IMR-90 (cell line): ENCODE measurements at regions of chr4 and their contacts with region 1.

Region 1: DNA sequence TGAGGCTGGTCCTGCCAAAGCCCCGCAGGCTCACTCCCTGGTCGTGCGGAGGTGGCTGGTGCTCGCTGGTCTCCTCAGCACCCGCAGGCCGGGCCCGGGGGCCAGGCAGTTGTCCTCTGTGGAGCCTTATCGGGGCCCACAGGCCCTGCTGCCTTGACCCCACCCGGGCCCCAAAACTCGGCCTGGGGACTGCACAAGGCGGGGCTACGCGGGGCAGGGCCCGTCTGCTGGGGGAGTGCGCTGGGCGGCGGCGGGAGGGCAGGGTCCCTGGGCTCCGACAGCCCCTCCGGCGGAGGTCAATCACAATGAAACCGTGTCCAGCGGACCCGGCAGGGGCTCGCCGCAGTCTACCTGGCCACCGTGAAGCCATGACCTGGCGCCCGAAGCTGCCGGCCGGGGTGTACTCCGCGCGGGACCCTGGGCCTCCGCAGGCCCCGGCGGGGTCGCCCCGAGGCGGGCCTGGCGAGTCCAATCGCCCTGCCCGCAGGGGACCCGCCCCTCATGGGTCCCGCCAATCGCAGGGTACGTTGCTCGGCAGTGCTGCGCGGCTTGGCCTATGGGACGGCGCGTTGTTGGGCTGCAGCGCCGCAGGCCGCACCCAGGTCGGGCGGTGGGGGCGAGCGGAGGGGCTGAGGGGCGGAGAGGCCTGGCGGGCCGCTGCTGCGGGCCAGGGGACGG is at the start of gene ADD1:
- DNase-seq: peak; percentile 91
- ATAC-seq: peak; percentile 93
- H3K4me3 ChIP-seq: peak within 1 kb of the TSS; percentile 77
- H3K27ac ChIP-seq: peak within 1 kb of the TSS; percentile 93
- H3K4me1 ChIP-seq: peaks cover 9% of the 10 kb centered on the region
- H3K27me3 ChIP-seq: no peaks in the 10 kb centered on the region
- CTCF ChIP-seq: no peak
- POLR2A ChIP-seq: peak; percentile 41; the same call in 1 of the 2 replicates
- RAD21 ChIP-seq: no peak
- total RNA-seq, gene ADD1: 117 and 122 TPM in 2 replicates

Region 2: DNA sequence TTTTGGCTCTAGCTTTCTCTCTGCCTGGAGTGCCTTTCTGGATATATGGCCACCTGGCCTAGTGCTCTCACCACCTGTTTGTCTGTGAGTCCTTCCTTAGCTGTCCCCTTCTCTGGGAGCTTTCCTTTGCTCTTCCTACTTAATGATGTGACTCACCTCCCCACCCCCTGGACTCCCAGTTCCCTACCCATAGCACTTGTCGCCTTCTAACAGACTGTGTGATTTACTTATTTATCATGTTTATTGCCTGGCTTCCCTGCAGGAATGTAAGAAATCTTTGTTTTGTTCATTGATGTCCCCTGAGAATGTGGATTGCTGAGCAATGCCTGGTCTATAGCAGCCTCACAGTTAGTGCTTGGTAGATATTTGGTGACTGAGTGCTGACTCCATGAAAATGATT is 19.1 kb after region 1 on chr4:
- CTCF ChIA-PET with region 1: no interaction called
- POLR2A ChIA-PET with region 1: no interaction called
- dilution Hi-C with region 1: no loop called
- in situ Hi-C with region 1: no loop called
- intact Hi-C with region 1: loop called (anchors 1 kb)
- DNase-seq: peak; percentile 41
- ATAC-seq: peak; percentile 31
- H3K4me3 ChIP-seq: no peak overlapping the region
- H3K27ac ChIP-seq: no peak overlapping the region
- H3K4me1 ChIP-seq: peaks cover 43% of the 10 kb centered on the region
- H3K27me3 ChIP-seq: no peaks in the 10 kb centered on the region
- CTCF ChIP-seq: no peak
- POLR2A ChIP-seq: no peak
- RAD21 ChIP-seq: no peak

Region 3: GRCh38 chr4:2882341-2882740 is 38.9 kb after region 1 on chr4:
- CTCF ChIA-PET with region 1: no interaction called
- POLR2A ChIA-PET with region 1: no interaction called
- dilution Hi-C with region 1: no loop called
- in situ Hi-C with region 1: no loop called
- intact Hi-C with region 1: loop called (anchors 5 kb)
- DNase-seq: peak; percentile 40
- ATAC-seq: peak; percentile 30
- H3K4me3 ChIP-seq: no peak overlapping the region
- H3K27ac ChIP-seq: no peak overlapping the region
- H3K4me1 ChIP-seq: peaks cover 4% of the 10 kb centered on the region
- H3K27me3 ChIP-seq: no peaks in the 10 kb centered on the region
- CTCF ChIP-seq: no peak
- POLR2A ChIP-seq: no peak
- RAD21 ChIP-seq: no peak

Region 4: GRCh38 chr4:2934813-2935761 is 91.7 kb after region 1 on chr4:
- CTCF ChIA-PET with region 1: no interaction called
- POLR2A ChIA-PET with region 1: no interaction called
- dilution Hi-C with region 1: no loop called
- in situ Hi-C with region 1: no loop called
- intact Hi-C with region 1: loop called (anchors 5 kb)
- DNase-seq: peak; percentile 85
- ATAC-seq: peak; percentile 62
- H3K4me3 ChIP-seq: peak overlapping the region; percentile 95
- H3K27ac ChIP-seq: peak overlapping the region; percentile 94
- H3K4me1 ChIP-seq: peaks cover 16% of the 10 kb centered on the region
- H3K27me3 ChIP-seq: no peaks in the 10 kb centered on the region
- CTCF ChIP-seq: no peak
- POLR2A ChIP-seq: peak; percentile 90
- RAD21 ChIP-seq: no peak

Region 5: GRCh38 chr4:3531879-3532713 is 688.7 kb after region 1 on chr4 and contains the start of gene LRPAP1:
- CTCF ChIA-PET with region 1: no interaction called
- POLR2A ChIA-PET with region 1: no interaction called
- dilution Hi-C with region 1: no loop called
- in situ Hi-C with region 1: no loop called
- intact Hi-C with region 1: no loop called
- DNase-seq: peak; percentile 82
- ATAC-seq: peak; percentile 95
- H3K4me3 ChIP-seq: peak within 1 kb of the TSS; percentile 97
- H3K27ac ChIP-seq: peak within 1 kb of the TSS; percentile 71
- H3K4me1 ChIP-seq: peaks cover 10% of the 10 kb centered on the region
- H3K27me3 ChIP-seq: peaks cover 5% of the 10 kb centered on the region; the same call in 1 of the 2 replicates
- CTCF ChIP-seq: no peak
- POLR2A ChIP-seq: peak; percentile 97
- RAD21 ChIP-seq: no peak
- total RNA-seq, gene LRPAP1: 114 and 135 TPM in 2 replicates